Heart left ventricle (tissue), 16 donors: ENCODE measurements at regions of chr1 and their contacts with region 1.

Region 1: DNA sequence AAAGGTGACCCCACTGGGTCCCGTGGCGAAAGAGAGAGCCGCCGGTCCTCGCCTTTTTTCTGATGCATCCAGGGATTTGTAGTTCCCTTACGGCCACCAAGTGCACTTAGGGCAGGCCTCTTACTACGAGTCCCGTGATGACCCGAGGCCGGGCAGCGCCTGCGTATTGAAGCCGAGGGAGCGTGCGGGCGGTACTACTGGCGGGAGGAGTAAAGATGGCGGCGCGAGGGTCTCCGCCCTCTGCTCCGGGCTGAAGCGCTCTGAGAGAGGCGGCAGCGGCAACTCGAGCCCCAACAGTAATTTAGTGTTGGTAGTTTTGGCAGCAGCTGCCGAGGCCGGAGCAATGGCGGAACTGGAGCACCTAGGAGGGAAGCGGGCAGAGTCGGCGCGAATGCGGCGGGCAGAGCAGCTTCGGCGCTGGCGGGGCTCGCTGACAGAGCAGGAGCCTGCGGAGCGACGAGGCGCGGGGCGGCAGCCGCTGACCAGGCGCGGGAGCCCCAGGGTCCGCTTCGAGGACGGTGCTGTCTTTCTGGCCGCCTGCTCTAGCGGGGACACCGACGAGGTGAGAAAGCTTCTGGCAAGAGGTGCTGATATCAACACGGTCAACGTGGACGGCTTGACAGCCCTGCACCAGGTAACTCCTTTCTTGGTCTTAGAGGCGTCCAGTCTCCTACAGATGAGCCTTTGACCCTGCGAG is at the start of gene PPP1R12B:
- DNase-seq: peak; percentile 97 to 99 (median 98)
- ATAC-seq: peak; percentile 97 to 100 (median 98)
- H3K4me3 ChIP-seq: peak within 1 kb of the TSS; percentile 75 to 98 (median 90)
- H3K27ac ChIP-seq: peak within 1 kb of the TSS; percentile 80 to 98 (median 92)
- H3K4me1 ChIP-seq: peaks cover 0 to 30% (median 15%) of the 10 kb centered on the region in 12 donors
- H3K27me3 ChIP-seq: no peaks in the 10 kb centered on the region
- CTCF ChIP-seq: no peak
- POLR2A ChIP-seq: peak in 1 of 2 donors; percentile 74
- total RNA-seq, gene PPP1R12B: 368 to 972 (median 618) TPM

Region 2: GRCh38 chr1:202405928-202406327 is 57.3 kb after region 1 on chr1:
- intact Hi-C with region 1: loop called in 5 of 10 experiments (anchors 5 to 10 kb)
- DNase-seq: no peak
- ATAC-seq: peak; percentile 29 to 53 (median 32)
- H3K4me3 ChIP-seq: no peak overlapping the region
- H3K27ac ChIP-seq: peak overlapping the region in 11 of 12 donors; percentile 2 to 71 (median 40)
- H3K4me1 ChIP-seq: peaks cover 0 to 65% (median 23%) of the 10 kb centered on the region in 12 donors
- H3K27me3 ChIP-seq: no peaks in the 10 kb centered on the region
- CTCF ChIP-seq: no peak
- POLR2A ChIP-seq: no peak

Region 3: DNA sequence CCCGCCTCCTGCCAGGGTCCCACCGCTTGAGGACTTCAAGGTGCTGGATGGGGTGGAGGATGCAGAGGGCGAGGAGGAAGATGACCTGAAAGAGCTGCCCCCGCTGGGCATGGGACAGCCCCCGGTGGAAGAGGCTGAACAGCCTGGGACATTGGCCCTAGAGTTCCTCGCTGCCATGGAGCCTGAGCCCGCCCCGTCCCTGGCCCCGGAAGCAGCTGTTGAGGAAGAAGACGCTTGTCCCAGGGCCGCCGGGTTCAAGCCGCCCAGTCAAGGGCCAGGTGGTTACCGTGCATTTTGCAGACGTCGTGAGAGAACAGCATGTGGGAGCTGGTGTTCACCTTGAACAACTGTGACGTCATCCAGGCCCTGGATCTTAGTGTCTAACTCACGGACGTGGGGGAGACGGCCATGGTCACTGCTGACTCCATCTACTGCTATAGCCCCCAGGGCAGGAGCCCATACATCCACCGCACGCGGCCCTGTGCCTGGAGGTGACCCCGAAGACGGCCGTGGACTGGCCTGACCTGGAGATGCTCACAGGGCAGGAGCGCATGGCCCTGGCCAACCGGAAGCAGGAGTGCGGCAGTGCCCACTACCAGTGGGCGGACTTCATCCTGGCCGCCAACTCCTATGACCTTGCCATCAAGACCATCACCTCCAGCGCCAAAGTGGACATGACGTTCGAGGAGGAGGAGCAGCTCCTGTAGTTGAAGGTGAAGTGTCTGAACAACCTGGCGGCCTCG is 89.9 kb after region 1 on chr1:
- intact Hi-C with region 1: loop called in 2 of 10 experiments (anchors 10 kb)
- DNase-seq: no peak
- ATAC-seq: peak in 2 of 4 donors; percentile 18 to 28
- H3K4me3 ChIP-seq: no peak overlapping the region
- H3K27ac ChIP-seq: peak overlapping the region in 1 of 12 donors; percentile 6
- H3K4me1 ChIP-seq: peaks cover 0 to 38% (median 9%) of the 10 kb centered on the region in 12 donors
- H3K27me3 ChIP-seq: no peaks in the 10 kb centered on the region
- CTCF ChIP-seq: no peak
- POLR2A ChIP-seq: no peak

Region 4: DNA sequence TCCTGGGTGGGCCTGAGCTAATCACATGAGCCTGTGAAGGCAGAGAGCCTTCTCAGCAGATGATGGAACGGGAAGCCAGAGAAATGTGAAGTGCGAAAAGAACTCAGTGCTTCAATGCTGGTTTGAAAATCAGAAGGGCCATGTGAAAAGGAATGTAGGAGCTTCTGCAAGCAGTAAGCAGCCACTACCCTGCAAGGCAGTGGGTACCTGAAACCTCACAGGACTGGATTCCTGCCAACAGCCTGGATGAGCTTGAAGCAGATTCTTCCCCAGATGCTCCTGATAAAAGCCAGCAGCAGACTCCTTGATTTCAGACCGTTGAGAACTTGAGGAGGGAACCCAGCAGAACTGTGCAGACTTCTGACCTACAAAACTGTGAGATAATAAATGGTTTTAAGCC is 203.0 kb after region 1 on chr1:
- intact Hi-C with region 1: no loop called
- DNase-seq: no peak
- ATAC-seq: no peak
- H3K4me3 ChIP-seq: no peak overlapping the region
- H3K27ac ChIP-seq: peak overlapping the region in 10 of 12 donors; percentile 5 to 82 (median 28)
- H3K4me1 ChIP-seq: peaks cover 0 to 77% (median 44%) of the 10 kb centered on the region in 12 donors
- H3K27me3 ChIP-seq: no peaks in the 10 kb centered on the region
- CTCF ChIP-seq: no peak
- POLR2A ChIP-seq: no peak

Region 5: GRCh38 chr1:202571347-202572339 is 223.0 kb after region 1 on chr1:
- intact Hi-C with region 1: loop called in 1 of 10 experiments (anchors 10 kb)
- DNase-seq: no peak
- ATAC-seq: no peak
- H3K4me3 ChIP-seq: no peak overlapping the region
- H3K27ac ChIP-seq: peak overlapping the region in 2 of 12 donors; percentile 27 to 78
- H3K4me1 ChIP-seq: peaks cover 0 to 81% (median 28%) of the 10 kb centered on the region in 12 donors
- H3K27me3 ChIP-seq: no peaks in the 10 kb centered on the region
- CTCF ChIP-seq: peak; percentile 54 to 85 (median 71)
- POLR2A ChIP-seq: no peak

Region 6: DNA sequence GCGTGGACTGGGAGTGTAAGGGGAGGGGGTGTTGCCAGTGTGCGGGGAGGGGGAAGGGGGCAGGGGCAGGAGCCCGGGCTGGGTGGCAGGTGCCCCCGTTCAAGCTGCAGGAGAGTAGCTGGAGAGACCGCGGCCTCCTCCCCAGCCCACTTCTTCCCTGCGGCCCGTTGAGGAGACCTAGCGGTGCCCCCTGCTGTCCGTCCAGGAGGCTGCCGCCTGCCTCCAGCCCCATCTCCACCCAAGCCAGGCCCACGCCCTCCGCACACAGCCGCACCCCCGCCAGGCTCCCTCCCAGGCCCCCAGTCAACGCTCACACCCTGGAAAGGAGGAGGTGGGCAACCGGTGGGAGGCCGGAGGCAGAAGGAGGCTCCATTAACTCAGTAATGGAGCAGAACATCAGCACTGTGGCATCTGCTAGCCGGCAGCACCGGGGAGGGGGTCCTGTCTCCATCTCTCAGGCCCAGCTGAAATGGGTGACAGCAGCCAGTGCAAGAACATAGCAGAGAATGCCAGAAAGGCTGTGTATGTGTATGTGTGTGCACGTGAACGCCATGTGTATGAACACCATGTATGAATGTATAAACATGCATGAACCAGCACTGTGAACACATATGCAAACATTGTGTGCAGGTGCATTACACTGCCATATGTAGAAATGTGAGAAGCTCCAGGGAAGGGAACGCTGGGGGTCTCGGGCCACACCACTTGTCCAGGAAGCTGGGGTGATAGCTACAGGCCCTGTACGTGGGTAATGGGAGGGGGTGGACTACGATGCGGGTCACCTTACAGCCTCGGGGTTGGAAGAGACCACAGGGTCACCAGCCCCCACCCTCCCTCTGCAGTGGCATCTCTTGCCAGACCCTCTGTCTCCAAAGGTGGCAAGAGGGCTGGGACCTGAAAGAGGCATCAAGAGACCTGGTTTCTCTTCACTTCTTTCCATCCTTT is 277.0 kb after region 1 on chr1:
- intact Hi-C with region 1: loop called in 4 of 10 experiments (anchors 5 to 10 kb)
- DNase-seq: peak; percentile 69 to 87 (median 77)
- ATAC-seq: peak; percentile 64 to 84 (median 81)
- H3K4me3 ChIP-seq: no peak overlapping the region
- H3K27ac ChIP-seq: no peak overlapping the region
- H3K4me1 ChIP-seq: peaks cover 0 to 30% (median 16%) of the 10 kb centered on the region in 12 donors
- H3K27me3 ChIP-seq: peaks cover 0 to 65% (median 0%) of the 10 kb centered on the region in 9 donors
- CTCF ChIP-seq: peak; percentile 55 to 80 (median 68)
- POLR2A ChIP-seq: no peak

Region 7: DNA sequence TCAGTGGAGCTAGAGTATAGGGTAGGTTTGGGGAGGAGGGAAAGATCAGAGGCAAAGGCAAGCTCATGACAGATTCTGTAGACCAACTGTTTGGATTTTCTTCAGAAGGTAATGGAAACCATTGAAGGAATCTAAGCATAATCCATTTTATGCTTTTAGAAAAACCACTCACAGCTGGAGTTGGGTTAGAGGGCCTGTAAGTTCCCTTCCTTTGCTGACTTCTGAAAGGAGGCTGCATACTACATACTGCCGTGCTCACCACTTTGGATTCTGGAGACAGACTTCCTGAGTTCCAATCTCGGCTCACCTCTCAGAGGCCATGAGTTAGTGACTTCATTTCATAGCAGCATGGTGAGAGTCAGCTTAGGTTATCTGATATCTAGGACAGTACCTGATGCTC is 368.0 kb after region 1 on chr1:
- intact Hi-C with region 1: loop called in 6 of 10 experiments (anchors 5 to 10 kb)
- DNase-seq: no peak
- ATAC-seq: no peak
- H3K4me3 ChIP-seq: no peak overlapping the region
- H3K27ac ChIP-seq: no peak overlapping the region
- H3K4me1 ChIP-seq: peaks cover 0 to 3% (median 0%) of the 10 kb centered on the region in 12 donors
- H3K27me3 ChIP-seq: peaks cover 0 to 61% (median 0%) of the 10 kb centered on the region in 9 donors
- CTCF ChIP-seq: no peak
- POLR2A ChIP-seq: no peak